B cell (primary cell): ENCODE measurements at regions of chr6 and their contacts with region 1.

Region 1: DNA sequence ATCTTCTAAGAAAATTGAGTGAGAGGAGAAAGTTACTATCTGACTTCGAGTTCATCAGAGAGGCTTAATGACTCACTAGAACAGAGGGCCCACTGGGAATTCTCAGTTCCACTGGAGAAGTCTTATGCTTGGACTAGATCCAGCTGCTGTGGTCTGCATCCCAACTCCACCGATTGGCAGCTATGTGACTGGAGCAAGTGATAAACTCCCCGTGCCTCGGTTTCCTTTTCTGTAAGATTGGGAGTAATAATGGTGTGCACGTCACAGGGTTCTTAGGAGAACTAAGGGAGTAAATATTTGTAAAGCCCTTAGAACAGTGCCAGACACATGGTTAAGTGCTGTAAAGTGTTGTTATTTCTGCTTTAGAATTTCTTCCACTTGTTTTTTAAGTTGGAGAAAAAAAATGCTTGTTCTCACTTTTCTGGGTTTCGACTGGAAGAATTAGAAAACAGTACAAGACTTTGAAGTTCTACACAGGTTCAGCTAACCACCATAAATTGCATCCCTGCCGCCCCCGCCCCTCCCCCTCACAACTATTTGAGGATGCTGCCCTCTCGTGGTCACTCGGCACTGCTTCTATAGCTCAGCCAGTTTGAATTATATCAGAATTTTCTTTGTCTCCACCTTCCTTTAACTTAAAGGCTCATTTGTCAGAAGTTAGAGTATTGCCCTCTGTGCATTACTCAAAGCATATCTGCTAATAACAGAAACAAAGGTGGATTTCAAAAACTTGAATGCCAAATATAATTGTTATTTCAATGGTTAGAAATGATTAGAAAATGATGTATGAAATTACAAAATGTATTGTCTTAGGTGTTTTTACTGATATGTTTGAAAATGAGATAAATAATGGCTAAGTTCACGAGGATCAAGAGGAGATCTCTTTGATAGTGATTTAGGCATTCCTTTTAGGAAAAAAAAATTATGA is 95.0 kb upstream of the IFNGR1 start:
- DNase-seq: peak; percentile 85
- ATAC-seq: peak; percentile 84
- H3K4me3 ChIP-seq: no peak overlapping the region
- H3K4me3 Mint-ChIP-seq: no peak overlapping the region
- H3K27ac ChIP-seq: no peak overlapping the region
- H3K27ac Mint-ChIP-seq: no peak overlapping the region
- H3K4me1 ChIP-seq: peaks cover 13 to 15% of the 10 kb centered on the region in 2 donors
- H3K4me1 Mint-ChIP-seq: peaks cover 22% of the 10 kb centered on the region
- H3K27me3 ChIP-seq: no peaks in the 10 kb centered on the region
- H3K27me3 Mint-ChIP-seq: no peaks in the 10 kb centered on the region
- CTCF ChIP-seq: peak; percentile 79

Region 2: DNA sequence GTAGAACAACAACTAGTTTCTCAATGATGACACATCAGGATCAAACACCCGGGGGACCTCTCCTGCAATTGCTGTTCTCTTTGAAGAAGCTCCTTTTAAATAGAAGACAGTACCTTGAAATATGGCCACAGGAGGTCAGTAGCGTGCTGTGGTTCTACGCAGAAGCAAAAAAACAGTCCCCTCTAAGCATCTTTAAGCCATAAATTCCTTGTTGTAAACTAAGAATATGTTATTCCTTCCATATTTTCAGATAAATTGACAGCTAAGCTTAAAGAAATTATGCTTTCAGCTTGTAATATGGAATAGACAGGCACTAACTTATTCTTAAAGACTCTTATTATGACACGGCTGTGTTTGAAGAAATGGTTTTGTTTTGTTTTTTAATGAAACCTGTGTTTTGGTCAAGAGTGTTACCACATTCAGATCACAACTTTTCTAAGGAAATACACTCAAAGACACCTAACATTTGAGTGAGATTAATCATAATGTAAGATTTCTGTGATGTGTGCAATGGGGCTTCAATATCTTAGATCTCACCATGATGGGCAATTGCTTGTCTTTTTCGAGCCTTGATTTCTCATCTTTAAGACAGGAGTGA is 219.7 kb before region 1 on chr6:
- CTCF ChIA-PET with region 1: interaction called, 128 read pairs
- POLR2A ChIA-PET with region 1: interaction called, 9 read pairs
- intact Hi-C with region 1: loop called (anchors 1 kb)
- DNase-seq: peak; percentile 84
- ATAC-seq: peak; percentile 34
- H3K4me3 ChIP-seq: no peak overlapping the region
- H3K4me3 Mint-ChIP-seq: peak overlapping the region; percentile 64
- H3K27ac ChIP-seq: peak overlapping the region; percentile 37 to 81
- H3K27ac Mint-ChIP-seq: peak overlapping the region; percentile 93
- H3K4me1 ChIP-seq: peaks cover 59% of the 10 kb centered on the region in 2 donors
- H3K4me1 Mint-ChIP-seq: peaks cover 59% of the 10 kb centered on the region
- H3K27me3 ChIP-seq: no peaks in the 10 kb centered on the region
- H3K27me3 Mint-ChIP-seq: no peaks in the 10 kb centered on the region
- CTCF ChIP-seq: peak; percentile 90

Region 3: DNA sequence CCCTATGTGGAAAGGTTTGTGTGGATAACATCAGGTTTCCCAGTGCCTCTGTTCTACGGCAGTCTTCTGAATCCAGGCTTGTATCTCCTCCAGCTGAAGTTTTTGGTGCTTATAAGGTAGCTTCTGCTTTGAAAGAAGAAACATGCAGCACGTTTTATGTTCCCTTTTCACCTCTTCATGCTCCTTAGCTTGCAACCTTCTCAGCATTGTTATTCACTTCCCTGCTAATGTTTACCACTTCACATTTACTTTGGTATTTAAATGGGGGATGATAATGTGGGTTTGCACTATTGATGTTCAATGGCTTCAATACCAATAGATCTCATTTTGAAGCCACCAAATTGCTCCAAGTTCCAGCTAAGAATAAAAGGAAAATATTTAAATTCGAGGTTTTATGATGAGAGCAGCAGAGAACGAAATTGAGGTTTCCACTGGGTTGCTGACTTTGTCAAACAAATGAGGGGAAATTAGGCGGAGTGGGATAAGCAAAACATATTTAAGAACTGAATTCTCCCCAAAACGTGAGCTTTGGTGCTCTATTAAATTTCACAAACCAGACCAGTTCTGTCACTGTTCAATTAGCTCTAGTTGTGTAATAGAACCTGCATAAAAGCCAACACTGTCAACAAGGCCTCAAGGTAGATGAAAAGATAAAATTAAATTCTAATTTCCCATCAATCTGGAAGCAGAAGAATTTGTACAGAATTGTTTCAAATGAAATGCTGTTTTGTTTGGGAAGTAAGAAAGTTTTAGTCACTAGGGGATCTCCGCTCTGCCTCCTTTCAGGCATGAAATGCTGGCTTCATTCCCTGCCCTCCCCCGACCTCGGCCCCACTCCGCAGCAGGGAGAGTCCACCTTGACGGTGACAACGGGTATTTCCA is 142.1 kb before region 1 on chr6:
- CTCF ChIA-PET with region 1: interaction called, 10 read pairs
- POLR2A ChIA-PET with region 1: no interaction called
- intact Hi-C with region 1: loop called (anchors 2 kb)
- DNase-seq: peak; percentile 78
- ATAC-seq: peak; percentile 66
- H3K4me3 ChIP-seq: peak overlapping the region in 1 of 5 experiments; percentile 31
- H3K4me3 Mint-ChIP-seq: peak overlapping the region; percentile 71
- H3K27ac ChIP-seq: peak overlapping the region; percentile 77 to 87
- H3K27ac Mint-ChIP-seq: peak overlapping the region; percentile 93
- H3K4me1 ChIP-seq: peaks cover 67 to 69% of the 10 kb centered on the region in 2 donors
- H3K4me1 Mint-ChIP-seq: peaks cover 75% of the 10 kb centered on the region
- H3K27me3 ChIP-seq: no peaks in the 10 kb centered on the region
- H3K27me3 Mint-ChIP-seq: no peaks in the 10 kb centered on the region
- CTCF ChIP-seq: no peak

Region 4: GRCh38 chr6:137271245-137272183 is 42.7 kb before region 1 on chr6:
- CTCF ChIA-PET with region 1: interaction called, 55 read pairs
- POLR2A ChIA-PET with region 1: no interaction called
- intact Hi-C with region 1: loop called (anchors 1 kb)
- DNase-seq: peak; percentile 63
- ATAC-seq: peak; percentile 72
- H3K4me3 ChIP-seq: no peak overlapping the region
- H3K4me3 Mint-ChIP-seq: no peak overlapping the region
- H3K27ac ChIP-seq: no peak overlapping the region
- H3K27ac Mint-ChIP-seq: no peak overlapping the region
- H3K4me1 ChIP-seq: peaks cover 5 to 14% of the 10 kb centered on the region in 2 donors
- H3K4me1 Mint-ChIP-seq: peaks cover 15% of the 10 kb centered on the region
- H3K27me3 ChIP-seq: no peaks in the 10 kb centered on the region
- H3K27me3 Mint-ChIP-seq: no peaks in the 10 kb centered on the region
- CTCF ChIP-seq: peak; percentile 93

Region 5: GRCh38 chr6:137341681-137342195 is 27.5 kb after region 1 on chr6:
- CTCF ChIA-PET with region 1: interaction called, 10 read pairs
- POLR2A ChIA-PET with region 1: no interaction called
- intact Hi-C with region 1: no loop called
- DNase-seq: peak; percentile 44
- ATAC-seq: no peak
- H3K4me3 ChIP-seq: peak overlapping the region in 1 of 5 experiments; percentile 62
- H3K4me3 Mint-ChIP-seq: peak overlapping the region; percentile 64
- H3K27ac ChIP-seq: no peak overlapping the region
- H3K27ac Mint-ChIP-seq: no peak overlapping the region
- H3K4me1 ChIP-seq: peaks cover 7 to 9% of the 10 kb centered on the region in 2 donors
- H3K4me1 Mint-ChIP-seq: peaks cover 15% of the 10 kb centered on the region
- H3K27me3 ChIP-seq: no peaks in the 10 kb centered on the region
- H3K27me3 Mint-ChIP-seq: peaks cover 12% of the 10 kb centered on the region
- CTCF ChIP-seq: peak; percentile 19

Region 6: DNA sequence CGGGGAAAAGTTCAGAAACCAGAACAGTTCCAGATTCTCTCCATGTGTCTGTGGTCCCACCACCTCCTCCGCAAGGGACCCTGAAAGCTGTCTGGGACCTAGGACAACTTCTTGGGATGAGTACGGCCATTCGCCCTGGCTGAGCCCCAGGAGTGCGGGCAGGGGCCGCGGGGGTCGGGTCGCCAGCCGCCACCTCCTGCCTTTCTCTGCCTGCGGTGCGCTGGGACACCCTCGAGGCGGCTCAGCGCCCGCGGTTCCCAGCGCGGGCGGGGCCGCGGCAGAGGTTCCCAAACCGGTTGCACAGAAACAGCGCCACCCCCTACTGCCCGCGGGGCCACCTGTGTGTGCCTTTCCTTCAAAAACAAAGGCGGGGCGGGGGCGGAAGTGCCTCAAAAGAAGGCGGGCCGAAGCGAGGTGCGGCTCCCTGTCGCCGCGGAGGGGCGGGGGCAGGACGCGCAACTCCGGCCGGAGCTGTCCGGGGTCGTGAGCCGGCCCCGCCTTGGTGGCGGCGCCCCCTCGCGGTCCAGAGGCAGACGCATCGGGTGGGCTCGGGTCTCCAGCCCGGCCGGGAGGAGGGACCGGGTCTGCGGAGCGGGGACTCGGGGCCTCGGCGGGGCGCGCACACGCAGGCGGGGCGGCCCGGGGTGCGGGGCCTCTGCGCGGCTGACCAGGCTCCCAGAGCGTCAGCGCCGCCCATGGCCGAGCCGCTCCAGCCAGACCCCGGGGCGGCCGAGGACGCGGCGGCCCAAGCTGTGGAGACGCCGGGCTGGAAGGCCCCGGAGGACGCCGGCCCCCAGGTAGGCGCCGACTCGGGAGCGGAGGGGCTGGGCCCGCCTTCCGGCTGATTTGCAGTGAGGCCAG is 1089.8 kb after region 1 on chr6 and contains the start of gene HEBP2:
- CTCF ChIA-PET with region 1: no interaction called
- POLR2A ChIA-PET with region 1: no interaction called
- intact Hi-C with region 1: no loop called
- DNase-seq: peak; percentile 93
- ATAC-seq: peak; percentile 86
- H3K4me3 ChIP-seq: peak within 1 kb of the TSS; percentile 83 to 95 (median 93)
- H3K4me3 Mint-ChIP-seq: peak within 1 kb of the TSS; percentile 89
- H3K27ac ChIP-seq: peak within 1 kb of the TSS; percentile 55 to 93
- H3K27ac Mint-ChIP-seq: peak within 1 kb of the TSS; percentile 94
- H3K4me1 ChIP-seq: peaks cover 8 to 16% of the 10 kb centered on the region in 2 donors
- H3K4me1 Mint-ChIP-seq: peaks cover 23% of the 10 kb centered on the region
- H3K27me3 ChIP-seq: no peaks in the 10 kb centered on the region
- H3K27me3 Mint-ChIP-seq: no peaks in the 10 kb centered on the region
- CTCF ChIP-seq: peak; percentile 52
- total RNA-seq, gene HEBP2: 35.1 and 40.7 TPM in 2 replicates